Psoas muscle (tissue), 8 donors: ENCODE measurements at regions of chr9 and their contacts with region 1.

Region 1: DNA sequence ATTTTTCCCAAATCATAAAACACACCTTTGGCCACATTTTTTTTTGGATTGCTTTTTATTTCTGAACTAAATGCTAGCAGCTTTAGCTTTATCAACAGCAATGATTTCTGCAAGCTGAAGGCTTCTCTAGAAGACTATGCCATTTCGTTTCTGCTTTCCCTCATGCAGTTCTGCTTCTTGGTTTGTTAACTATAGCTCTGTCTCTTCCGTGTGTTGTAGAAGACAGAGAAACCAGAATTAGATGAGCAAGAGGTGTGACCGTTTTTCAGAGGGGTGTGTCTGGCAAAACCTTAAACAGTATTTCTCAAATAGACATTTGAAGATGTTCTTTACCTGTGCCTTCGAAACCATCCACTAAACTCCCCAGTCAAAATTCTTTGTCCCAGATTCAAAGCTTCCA is 131.5 kb downstream of the ZNF462 start:
- DNase-seq: no peak
- ATAC-seq: no peak
- H3K4me3 ChIP-seq: no peak overlapping the region
- H3K27ac ChIP-seq: no peak overlapping the region
- H3K4me1 ChIP-seq: no peaks in the 10 kb centered on the region
- H3K27me3 ChIP-seq: no peaks in the 10 kb centered on the region
- CTCF ChIP-seq: no peak

Region 2: GRCh38 chr9:106941916-106942315 is 52.5 kb before region 1 on chr9:
- intact Hi-C with region 1: loop called in 1 of 2 experiments (anchors 5 kb)
- DNase-seq: no peak
- ATAC-seq: peak in 1 of 4 donors; percentile 6
- H3K4me3 ChIP-seq: no peak overlapping the region
- H3K27ac ChIP-seq: peak overlapping the region; percentile 33
- H3K4me1 ChIP-seq: peaks cover 5% of the 10 kb centered on the region
- H3K27me3 ChIP-seq: no peaks in the 10 kb centered on the region
- CTCF ChIP-seq: no peak

Region 3: GRCh38 chr9:106962615-106963363 is 31.7 kb before region 1 on chr9:
- intact Hi-C with region 1: no loop called
- DNase-seq: no peak
- ATAC-seq: peak; percentile 22 to 58 (median 48)
- H3K4me3 ChIP-seq: no peak overlapping the region
- H3K27ac ChIP-seq: peak overlapping the region; percentile 54
- H3K4me1 ChIP-seq: peaks cover 52% of the 10 kb centered on the region
- H3K27me3 ChIP-seq: no peaks in the 10 kb centered on the region
- CTCF ChIP-seq: no peak

Region 4: DNA sequence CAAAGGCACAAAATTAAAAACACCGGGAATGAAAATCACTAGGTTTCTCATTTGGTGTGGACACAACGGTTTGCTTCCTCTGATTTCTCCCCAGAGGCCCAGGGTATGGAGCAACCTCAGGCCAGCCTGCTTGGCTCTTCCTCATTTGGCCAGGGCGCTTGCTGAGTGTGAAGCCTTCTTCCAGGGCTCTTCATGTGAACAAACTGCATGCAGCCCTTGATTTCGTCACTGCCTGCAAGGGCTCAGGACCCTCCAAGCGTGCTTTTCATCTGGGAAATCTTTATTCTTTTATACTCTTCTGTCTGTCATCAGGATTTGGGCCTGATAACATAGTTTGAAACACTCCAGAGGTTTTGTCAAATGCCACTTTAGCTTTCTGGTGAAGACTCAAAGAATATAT is 617.7 kb after region 1 on chr9:
- intact Hi-C with region 1: loop called in 1 of 2 experiments (anchors 5 kb)
- DNase-seq: peak; percentile 82 to 87
- ATAC-seq: peak in 3 of 4 donors; percentile 56 to 77 (median 71)
- H3K4me3 ChIP-seq: no peak overlapping the region
- H3K27ac ChIP-seq: no peak overlapping the region
- H3K4me1 ChIP-seq: no peaks in the 10 kb centered on the region
- H3K27me3 ChIP-seq: no peaks in the 10 kb centered on the region
- CTCF ChIP-seq: no peak